ENCODE measurements at regions of chr18 and their contacts with region 1.

Region 1: GRCh38 chr18:63367053-63367953 is at the start of gene KDSR:
- DNase-seq: peak; percentile 96 to 98
- H3K4me3 ChIP-seq: peak within 1 kb of the TSS; percentile 74 to 82
- H3K27ac ChIP-seq: peak within 1 kb of the TSS; percentile 93 to 95
- H3K4me1 ChIP-seq: peaks cover 9 to 35% (median 21%) of the 10 kb centered on the region in 4 donors
- H3K27me3 ChIP-seq: no peaks in the 10 kb centered on the region
- CTCF ChIP-seq: no peak

Region 2: GRCh38 chr18:63422087-63422809 is 54.9 kb after region 1 on chr18 and contains the start of gene VPS4B:
- intact Hi-C with region 1: loop called (anchors 1 kb)
- DNase-seq: peak; percentile 99 to 100
- H3K4me3 ChIP-seq: peak within 1 kb of the TSS; percentile 78 to 90
- H3K27ac ChIP-seq: peak within 1 kb of the TSS; percentile 90 to 95
- H3K4me1 ChIP-seq: peaks cover 0 to 39% (median 18%) of the 10 kb centered on the region in 4 donors
- H3K27me3 ChIP-seq: no peaks in the 10 kb centered on the region
- CTCF ChIP-seq: no peak

Region 3: DNA sequence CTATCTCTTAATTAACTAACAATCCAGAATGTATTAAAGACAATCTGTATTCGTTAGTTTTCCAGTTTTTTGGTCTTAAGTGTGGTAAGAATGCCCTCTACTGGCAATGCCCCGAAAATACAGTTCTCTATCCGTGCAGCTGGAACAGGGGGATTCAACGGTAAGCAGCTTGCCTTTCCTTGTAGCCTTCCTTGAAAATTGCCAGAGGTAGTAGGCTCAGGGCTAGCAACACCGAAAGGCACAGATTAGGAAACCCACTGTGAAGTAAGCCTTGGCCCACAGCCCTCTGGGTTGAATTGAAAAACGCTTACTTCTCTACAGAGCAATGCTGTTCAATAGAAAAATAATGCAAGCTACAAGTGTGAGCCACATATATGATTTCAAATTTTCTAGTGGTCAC is 72.0 kb after region 1 on chr18:
- intact Hi-C with region 1: loop called (anchors 5 kb)
- DNase-seq: peak in 1 of 2 donors; percentile 41
- H3K4me3 ChIP-seq: no peak overlapping the region
- H3K27ac ChIP-seq: no peak overlapping the region
- H3K4me1 ChIP-seq: peaks cover 0 to 19% (median 11%) of the 10 kb centered on the region in 4 donors
- H3K27me3 ChIP-seq: no peaks in the 10 kb centered on the region
- CTCF ChIP-seq: peak; percentile 78 to 79

Measured in tibial artery (tissue), 4 donors.